ENCODE measurements at regions of chr16 and their contacts with region 1.

Region 1: GRCh38 chr16:58000706-58001676 is at the start of gene USB1:
- DNase-seq: peak; percentile 75 to 92
- H3K4me3 ChIP-seq: peak within 1 kb of the TSS; percentile 79 to 91
- H3K27ac ChIP-seq: peak within 1 kb of the TSS; percentile 90 to 98
- H3K4me1 ChIP-seq: peaks cover 5 to 48% (median 30%) of the 10 kb centered on the region in 4 donors
- H3K27me3 ChIP-seq: no peaks in the 10 kb centered on the region
- CTCF ChIP-seq: peak; percentile 54 to 57

Region 2: GRCh38 chr16:56191156-56191815 is 1809.7 kb before region 1 on chr16 and contains the start of gene GNAO1:
- intact Hi-C with region 1: no loop called
- DNase-seq: peak; percentile 52 to 84
- H3K4me3 ChIP-seq: peak within 1 kb of the TSS; percentile 85 to 86
- H3K27ac ChIP-seq: peak within 1 kb of the TSS; percentile 89 to 94
- H3K4me1 ChIP-seq: peaks cover 0 to 50% (median 41%) of the 10 kb centered on the region in 4 donors
- H3K27me3 ChIP-seq: no peaks in the 10 kb centered on the region
- CTCF ChIP-seq: no peak

Region 3: DNA sequence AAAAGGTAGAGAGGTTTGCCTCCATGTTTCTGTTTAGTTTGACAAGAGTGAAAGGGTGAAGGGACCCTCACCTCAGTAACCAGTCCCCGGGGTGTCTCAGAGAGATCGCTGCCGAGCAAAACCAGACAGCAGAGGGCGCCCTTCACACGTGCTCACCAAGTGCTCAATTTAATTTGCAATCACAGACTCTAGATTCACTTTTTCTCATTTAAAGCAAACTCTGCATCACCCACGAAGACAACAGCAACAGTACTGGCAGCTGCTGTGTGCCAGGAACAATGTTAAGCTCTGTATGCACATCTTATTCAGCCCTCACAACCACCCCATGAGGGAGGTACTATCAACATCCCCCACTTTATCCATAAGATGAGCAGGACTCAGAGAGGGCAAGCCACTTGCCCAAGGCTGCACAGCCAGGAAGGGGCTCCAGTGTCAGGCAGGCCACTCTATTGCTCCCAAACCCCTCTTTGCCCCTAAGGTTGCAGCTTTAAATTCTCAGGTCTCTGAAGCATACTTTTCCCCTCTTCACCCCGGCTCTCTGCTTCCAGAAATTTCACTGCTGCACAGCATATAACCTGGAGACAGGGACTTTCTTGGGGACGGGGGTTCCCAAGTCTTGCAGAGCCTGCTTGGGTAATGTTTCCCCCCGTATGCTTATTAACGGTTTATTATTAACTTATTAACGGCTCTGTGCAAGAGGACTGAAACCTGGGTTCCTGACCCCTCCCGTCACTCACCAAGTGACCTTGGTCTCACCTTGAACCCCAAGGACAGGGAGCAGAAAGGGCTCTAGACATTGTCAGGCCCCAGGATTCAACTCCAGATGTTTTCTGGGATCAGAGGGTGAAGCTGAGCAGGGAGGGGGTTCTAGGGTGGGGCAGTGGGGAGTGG is 101.0 kb before region 1 on chr16:
- intact Hi-C with region 1: loop called (anchors 5 kb)
- DNase-seq: peak; percentile 72
- H3K4me3 ChIP-seq: no peak overlapping the region
- H3K27ac ChIP-seq: no peak overlapping the region
- H3K4me1 ChIP-seq: no peaks in the 10 kb centered on the region
- H3K27me3 ChIP-seq: peaks cover 0 to 47% of the 10 kb centered on the region in 2 donors
- CTCF ChIP-seq: peak; percentile 72 to 77

Measured in tibial artery (tissue), 4 donors.